Heart right ventricle (tissue), 16 donors: ENCODE measurements at regions of chr6 and their contacts with region 1.

Region 1: GRCh38 chr6:2634139-2634964 is 116.4 kb downstream of the MYLK4 start:
- DNase-seq: peak; percentile 88
- ATAC-seq: peak; percentile 90 to 94 (median 92)
- H3K4me3 ChIP-seq: peak overlapping the region; percentile 36 to 59 (median 58)
- H3K27ac ChIP-seq: peak overlapping the region; percentile 20 to 94 (median 78)
- H3K4me1 ChIP-seq: peaks cover 2 to 34% (median 22%) of the 10 kb centered on the region in 9 donors
- H3K27me3 ChIP-seq: no peaks in the 10 kb centered on the region
- CTCF ChIP-seq: peak; percentile 96 to 99 (median 99)

Region 2: DNA sequence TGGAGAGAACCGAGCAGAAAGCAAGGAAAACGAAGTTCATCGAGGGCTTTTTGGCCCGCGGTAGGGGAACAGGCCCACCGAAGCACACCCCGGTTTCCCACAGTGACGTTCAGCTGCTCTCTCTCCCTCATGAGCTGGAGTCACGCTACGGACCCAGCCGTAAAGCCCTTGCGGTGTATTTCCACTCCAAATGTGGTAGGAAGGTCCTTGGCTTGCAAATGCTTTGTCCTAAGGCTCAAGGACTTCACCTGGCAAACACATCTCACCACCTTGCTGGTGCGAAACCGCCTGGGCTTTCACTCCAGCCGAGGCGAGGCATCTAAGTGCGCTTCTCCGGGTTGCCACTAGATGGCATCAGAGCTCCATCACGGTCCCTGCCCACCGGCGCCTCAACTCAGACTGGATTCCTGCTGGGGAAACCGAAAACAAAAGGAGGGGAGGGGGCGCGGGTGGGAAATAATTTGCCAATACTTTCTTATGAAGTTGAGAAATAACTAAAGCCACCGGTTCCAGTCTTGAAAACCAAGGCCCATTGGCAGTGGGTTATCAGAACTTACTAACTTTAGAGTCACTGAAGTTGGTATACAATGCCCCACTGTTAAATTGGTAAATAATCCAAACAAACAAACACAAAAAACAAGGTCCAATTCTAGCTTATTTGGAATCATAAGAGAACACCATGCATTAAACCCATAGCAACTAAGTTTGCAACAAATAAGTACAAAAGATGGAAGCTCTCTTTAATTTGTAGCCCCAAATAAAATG is 1038.1 kb before region 1 on chr6:
- intact Hi-C with region 1: loop called in 8 of 10 experiments (anchors 2 to 5 kb)
- DNase-seq: peak; percentile 58 to 61
- ATAC-seq: peak; percentile 73 to 90 (median 82)
- H3K4me3 ChIP-seq: peak overlapping the region in 9 of 10 donors; percentile 7 to 47 (median 33)
- H3K27ac ChIP-seq: no peak overlapping the region
- H3K4me1 ChIP-seq: peaks cover 0 to 11% (median 7%) of the 10 kb centered on the region in 9 donors
- H3K27me3 ChIP-seq: peaks cover 4 to 81% (median 52%) of the 10 kb centered on the region in 7 donors
- CTCF ChIP-seq: peak; percentile 86 to 98 (median 94)

Region 3: DNA sequence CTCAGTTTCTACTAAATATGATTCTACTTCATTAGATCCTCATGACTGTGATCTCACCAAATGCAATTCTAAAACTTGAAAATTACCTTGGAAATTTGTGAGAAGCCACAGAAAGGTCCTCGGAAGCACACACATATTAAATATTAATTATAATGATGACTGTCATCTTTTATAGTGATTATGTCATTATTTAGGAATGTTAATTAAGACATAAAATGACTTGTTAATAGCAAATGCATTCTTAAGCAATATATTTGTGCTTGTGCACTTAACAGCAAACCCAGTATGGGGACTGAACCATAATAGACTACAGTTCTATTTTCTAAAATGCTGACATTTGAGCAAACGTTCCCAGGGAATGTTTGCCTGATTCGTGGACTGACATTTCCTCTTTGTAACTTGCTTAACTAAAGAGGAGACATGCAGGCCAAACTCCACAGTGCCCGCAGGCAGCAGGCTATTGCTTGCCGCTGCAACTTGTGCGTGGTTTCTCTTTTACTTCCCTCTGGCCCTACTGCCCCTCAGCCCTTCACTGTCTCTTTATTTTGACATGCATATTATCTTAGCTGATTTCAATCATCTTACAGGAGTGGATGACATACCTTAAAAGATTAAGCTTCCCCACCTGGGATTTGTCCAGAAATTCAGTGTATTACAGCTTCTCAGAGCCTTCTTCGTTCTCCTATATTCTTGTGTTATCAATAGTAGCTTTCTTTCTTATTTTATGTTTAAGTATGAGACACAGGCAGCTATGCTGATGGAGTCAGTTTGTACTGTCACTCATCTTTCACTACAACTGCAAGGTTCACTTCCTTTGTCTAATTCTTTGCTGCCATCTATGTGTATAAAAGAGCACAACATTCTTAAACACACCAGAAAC is 530.5 kb before region 1 on chr6:
- intact Hi-C with region 1: loop called in 1 of 10 experiments (anchors 10 kb)
- DNase-seq: no peak
- ATAC-seq: peak in 7 of 8 donors; percentile 75 to 83 (median 79)
- H3K4me3 ChIP-seq: peak overlapping the region in 4 of 10 donors; percentile 5 to 26 (median 14)
- H3K27ac ChIP-seq: peak overlapping the region in 2 of 10 donors; percentile 17 to 24
- H3K4me1 ChIP-seq: peaks cover 0 to 10% (median 0%) of the 10 kb centered on the region in 9 donors
- H3K27me3 ChIP-seq: no peaks in the 10 kb centered on the region
- CTCF ChIP-seq: peak in 8 of 9 donors; percentile 30 to 77 (median 65)

Region 4: DNA sequence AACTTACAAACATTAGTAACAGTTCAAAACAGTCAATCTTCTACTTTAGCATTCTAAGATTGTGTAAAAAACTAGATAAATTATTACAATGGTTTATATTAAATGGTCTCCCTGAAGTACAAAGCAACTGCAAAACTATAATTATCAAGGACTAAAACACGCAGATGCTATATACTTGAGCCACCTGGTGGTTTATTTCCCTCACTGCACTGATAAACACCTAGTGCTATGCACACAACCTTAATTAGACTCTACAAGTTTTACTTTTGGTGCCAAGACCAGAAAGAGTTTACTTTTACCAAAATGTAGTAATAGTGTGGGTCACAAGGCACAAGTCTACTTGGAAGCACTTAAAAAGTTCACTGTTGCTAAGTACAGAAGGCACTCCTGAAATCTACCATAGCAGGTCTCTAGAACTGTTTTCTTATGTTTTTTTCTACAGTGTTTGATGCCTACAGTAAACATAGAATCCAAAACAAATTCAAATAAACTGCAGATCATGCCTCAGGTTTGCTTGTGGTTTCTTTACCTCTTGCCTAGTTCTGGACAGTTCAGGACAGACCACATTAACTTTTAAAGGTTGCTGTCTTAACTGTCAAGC is 438.2 kb before region 1 on chr6:
- intact Hi-C with region 1: loop called in 2 of 10 experiments (anchors 5 to 10 kb)
- DNase-seq: peak in 1 of 2 donors; percentile 42
- ATAC-seq: peak in 7 of 8 donors; percentile 61 to 85 (median 75)
- H3K4me3 ChIP-seq: no peak overlapping the region
- H3K27ac ChIP-seq: peak overlapping the region in 1 of 10 donors; percentile 18
- H3K4me1 ChIP-seq: peaks cover 0 to 22% (median 13%) of the 10 kb centered on the region in 9 donors
- H3K27me3 ChIP-seq: no peaks in the 10 kb centered on the region
- CTCF ChIP-seq: peak; percentile 67 to 87 (median 81)

Region 5: DNA sequence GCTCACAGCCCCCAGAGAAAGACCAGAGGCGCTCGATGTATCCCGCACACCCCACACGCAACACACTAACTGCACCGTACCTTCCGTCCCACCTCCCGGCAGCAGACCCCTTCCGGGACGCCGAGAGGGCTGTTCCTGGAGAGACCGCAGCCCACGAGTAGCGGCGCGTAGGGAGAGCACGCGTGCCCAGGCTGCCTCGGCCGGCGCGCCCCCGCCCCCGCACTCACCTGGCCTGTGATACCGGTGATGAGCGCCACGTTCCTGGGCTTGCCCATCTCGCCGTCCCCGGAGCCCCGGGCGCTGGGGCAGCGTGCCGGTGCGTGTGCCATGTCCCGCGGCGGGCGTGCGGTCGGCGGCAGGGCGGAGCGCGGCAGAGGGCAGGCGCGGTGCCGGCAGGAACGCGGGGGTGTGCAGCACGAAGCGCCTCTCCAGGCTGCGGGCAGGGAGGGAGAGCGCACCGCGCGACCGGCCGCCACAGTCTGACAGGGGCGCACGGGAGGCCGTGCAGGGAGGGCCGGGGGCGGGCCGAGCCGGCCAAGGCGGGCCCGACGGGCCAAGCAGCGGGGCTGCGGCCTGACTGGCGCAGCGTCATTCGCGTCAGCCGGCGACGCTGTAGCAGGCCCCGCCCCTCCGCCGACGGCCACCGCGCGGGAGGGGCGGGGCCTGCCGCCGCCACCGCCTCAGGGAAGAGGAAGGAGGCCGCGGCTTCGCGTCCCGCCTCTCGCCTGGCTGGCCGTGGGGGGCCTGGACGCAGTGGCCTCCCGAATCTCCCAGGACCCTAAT is 389.1 kb before region 1 on chr6 and contains the start of gene GMDS:
- intact Hi-C with region 1: loop called in 1 of 10 experiments (anchors 5 kb)
- DNase-seq: peak; percentile 86 to 89
- ATAC-seq: peak; percentile 99 to 100 (median 100)
- H3K4me3 ChIP-seq: peak within 1 kb of the TSS; percentile 63 to 98 (median 92)
- H3K27ac ChIP-seq: peak within 1 kb of the TSS; percentile 9 to 98 (median 86)
- H3K4me1 ChIP-seq: peaks cover 2 to 39% (median 19%) of the 10 kb centered on the region in 9 donors
- H3K27me3 ChIP-seq: no peaks in the 10 kb centered on the region
- CTCF ChIP-seq: peak in 1 of 9 donors; percentile 32
- total RNA-seq, gene GMDS: 5.0 to 10.6 (median 6.8) TPM

Region 6: DNA sequence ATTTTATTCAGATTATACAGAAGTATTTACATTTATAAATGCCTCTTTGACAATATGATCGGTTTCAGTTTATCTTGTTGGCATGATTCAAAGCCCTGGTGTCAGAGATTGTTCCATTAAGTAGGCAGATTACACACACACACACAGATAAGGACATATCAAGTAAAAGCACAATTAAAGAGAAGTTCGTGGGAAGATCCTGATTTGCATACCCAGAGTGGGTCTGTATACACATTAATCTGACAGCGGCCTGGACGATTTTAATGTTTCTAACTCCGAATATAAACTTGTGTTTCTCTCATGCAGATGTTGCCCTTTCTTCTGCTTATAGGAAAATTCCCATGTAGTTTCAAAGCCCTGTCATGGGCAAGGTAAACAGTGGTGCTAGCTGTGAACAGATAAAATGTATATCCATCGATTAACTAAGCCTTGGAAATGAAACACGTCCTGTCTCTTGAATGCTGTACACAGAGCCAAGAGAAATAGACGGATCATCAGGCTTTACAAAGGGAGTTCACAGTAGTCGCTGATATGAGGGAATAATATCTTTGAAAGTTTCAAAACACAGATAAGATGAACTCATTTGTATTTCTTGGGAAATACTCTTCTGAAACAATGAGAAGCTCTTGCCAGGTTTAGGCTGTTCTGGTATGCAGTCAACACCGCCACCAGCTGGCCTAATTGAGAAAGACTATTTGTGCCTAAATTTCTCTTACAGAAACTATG is 280.8 kb before region 1 on chr6:
- intact Hi-C with region 1: loop called in 4 of 10 experiments (anchors 10 kb)
- DNase-seq: peak; percentile 23 to 69
- ATAC-seq: peak; percentile 59 to 81 (median 78)
- H3K4me3 ChIP-seq: no peak overlapping the region
- H3K27ac ChIP-seq: no peak overlapping the region
- H3K4me1 ChIP-seq: peaks cover 0 to 12% (median 0%) of the 10 kb centered on the region in 9 donors
- H3K27me3 ChIP-seq: no peaks in the 10 kb centered on the region
- CTCF ChIP-seq: peak; percentile 63 to 88 (median 81)

Region 7: GRCh38 chr6:2478200-2478599 is 156.2 kb before region 1 on chr6:
- intact Hi-C with region 1: loop called in 1 of 10 experiments (anchors 10 kb)
- DNase-seq: peak in 1 of 2 donors; percentile 13
- ATAC-seq: peak in 6 of 8 donors; percentile 5 to 59 (median 39)
- H3K4me3 ChIP-seq: no peak overlapping the region
- H3K27ac ChIP-seq: peak overlapping the region in 7 of 10 donors; percentile 13 to 68 (median 50)
- H3K4me1 ChIP-seq: peaks cover 0 to 36% (median 24%) of the 10 kb centered on the region in 9 donors
- H3K27me3 ChIP-seq: no peaks in the 10 kb centered on the region
- CTCF ChIP-seq: no peak

Region 8: DNA sequence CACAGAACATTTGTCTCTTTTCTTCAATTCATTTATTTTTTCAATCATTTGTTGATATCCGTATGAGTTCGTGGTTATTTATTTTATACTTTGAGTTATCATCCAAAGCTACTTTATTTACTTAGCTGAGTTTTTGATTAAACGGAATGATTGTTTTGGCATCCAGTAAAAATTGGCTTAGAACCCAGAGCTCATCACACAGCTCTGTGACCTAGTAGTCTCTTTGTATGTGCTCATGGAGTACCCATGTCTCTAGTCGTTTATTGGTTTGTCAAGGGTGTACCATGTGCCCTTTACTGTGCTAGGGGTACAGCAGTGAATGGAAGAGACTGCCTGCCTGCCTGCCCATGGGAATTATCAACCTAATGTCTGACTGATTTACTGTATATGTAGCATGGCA is 25.8 kb before region 1 on chr6:
- intact Hi-C with region 1: no loop called
- DNase-seq: no peak
- ATAC-seq: no peak
- H3K4me3 ChIP-seq: no peak overlapping the region
- H3K27ac ChIP-seq: no peak overlapping the region
- H3K4me1 ChIP-seq: no peaks in the 10 kb centered on the region
- H3K27me3 ChIP-seq: no peaks in the 10 kb centered on the region
- CTCF ChIP-seq: no peak